CD8-positive, alpha-beta T cell (primary cell): ENCODE measurements at regions of chr19 and their contacts with region 1.

Region 1: DNA sequence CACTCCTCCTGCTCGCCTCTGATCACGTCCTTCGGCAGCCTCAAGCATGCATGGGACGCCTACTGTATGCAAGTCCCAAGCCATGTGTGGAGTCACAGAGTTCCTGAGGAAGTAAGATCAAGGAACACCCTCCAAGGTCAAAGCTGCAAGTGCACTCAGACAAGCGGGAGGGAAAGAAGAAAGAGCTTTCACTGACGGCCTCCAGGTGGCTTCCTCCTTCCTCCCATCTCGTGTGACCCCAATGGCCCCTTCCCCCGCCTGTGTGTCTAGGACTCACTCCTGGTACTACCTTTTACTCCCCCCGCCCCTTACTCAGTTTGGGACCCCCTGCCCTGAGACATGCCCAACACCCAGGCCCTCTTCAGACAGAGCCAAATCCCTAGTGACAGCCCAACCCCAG is 6.0 kb downstream of the HAUS8 start:
- DNase-seq: no peak
- ATAC-seq: no peak
- H3K4me3 ChIP-seq: no peak overlapping the region
- H3K4me3 Mint-ChIP-seq: no peak overlapping the region
- H3K27ac ChIP-seq: no peak overlapping the region
- H3K27ac Mint-ChIP-seq: no peak overlapping the region
- H3K4me1 ChIP-seq: peaks cover 27% of the 10 kb centered on the region
- H3K4me1 Mint-ChIP-seq: peaks cover 48% of the 10 kb centered on the region
- H3K27me3 ChIP-seq: no peaks in the 10 kb centered on the region
- H3K27me3 Mint-ChIP-seq: no peaks in the 10 kb centered on the region
- CTCF ChIP-seq: no peak

Region 2: GRCh38 chr19:17021793-17022583 is 47.2 kb before region 1 on chr19:
- CTCF ChIA-PET with region 1: no interaction called
- POLR2A ChIA-PET with region 1: no interaction called
- intact Hi-C with region 1: no loop called
- DNase-seq: peak in 1 of 9 experiments; percentile 29
- ATAC-seq: no peak
- H3K4me3 ChIP-seq: no peak overlapping the region
- H3K4me3 Mint-ChIP-seq: no peak overlapping the region
- H3K27ac ChIP-seq: no peak overlapping the region
- H3K27ac Mint-ChIP-seq: no peak overlapping the region
- H3K4me1 ChIP-seq: no peaks in the 10 kb centered on the region
- H3K4me1 Mint-ChIP-seq: peaks cover 6% of the 10 kb centered on the region
- H3K27me3 ChIP-seq: peaks cover 0 to 5% of the 10 kb centered on the region in 2 experiments
- H3K27me3 Mint-ChIP-seq: peaks cover 29% of the 10 kb centered on the region
- CTCF ChIP-seq: no peak

Region 3: DNA sequence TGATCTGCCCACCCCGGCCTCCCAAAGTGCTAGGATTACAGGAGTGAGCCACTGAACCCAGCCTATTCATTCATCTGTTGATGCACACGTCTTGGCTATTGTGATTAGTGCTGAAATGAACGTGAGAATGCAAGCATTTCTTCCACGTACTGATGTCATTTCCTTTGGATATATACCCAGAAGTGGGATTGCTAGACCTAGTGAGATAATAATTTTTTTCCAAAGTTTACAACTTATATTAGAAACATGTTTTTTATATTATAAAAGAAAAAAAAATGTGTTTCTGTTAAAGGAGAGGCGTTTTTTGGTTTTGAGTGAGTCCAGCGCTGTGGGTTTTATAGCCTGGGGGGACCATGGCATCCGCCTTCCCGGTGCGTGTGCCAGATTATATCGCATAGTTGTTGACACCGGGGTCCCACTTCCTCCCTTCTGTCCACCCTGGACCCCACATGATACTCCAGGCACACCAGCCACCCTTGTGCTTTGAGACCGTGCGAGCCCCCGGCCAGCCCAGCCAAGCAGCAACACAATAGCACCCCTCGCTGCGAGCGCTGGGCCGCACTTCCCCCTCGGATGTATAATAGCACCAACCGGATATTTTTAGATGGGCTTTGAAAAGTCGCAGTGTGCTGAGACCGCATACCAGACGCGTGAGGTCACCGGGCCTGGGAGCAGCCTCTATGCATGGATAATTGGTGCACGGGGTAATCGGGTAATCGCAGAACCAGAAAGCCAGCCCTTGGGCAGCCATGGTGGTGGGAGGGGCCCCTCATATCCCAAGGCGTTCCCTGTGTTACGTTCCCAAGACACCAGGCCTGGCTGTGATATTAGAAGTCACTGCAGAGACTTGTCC is 66.0 kb after region 1 on chr19:
- CTCF ChIA-PET with region 1: no interaction called
- POLR2A ChIA-PET with region 1: no interaction called
- intact Hi-C with region 1: loop called in 1 of 2 experiments (anchors 2 kb)
- DNase-seq: peak; percentile 19 to 75 (median 53)
- ATAC-seq: peak; percentile 91
- H3K4me3 ChIP-seq: peak overlapping the region in 1 of 2 experiments; percentile 41
- H3K4me3 Mint-ChIP-seq: peak overlapping the region; percentile 80
- H3K27ac ChIP-seq: peak overlapping the region in 1 of 2 experiments; percentile 14
- H3K27ac Mint-ChIP-seq: peak overlapping the region; percentile 87
- H3K4me1 ChIP-seq: peaks cover 13% of the 10 kb centered on the region
- H3K4me1 Mint-ChIP-seq: peaks cover 28% of the 10 kb centered on the region
- H3K27me3 ChIP-seq: no peaks in the 10 kb centered on the region
- H3K27me3 Mint-ChIP-seq: no peaks in the 10 kb centered on the region
- CTCF ChIP-seq: no peak

Region 4: DNA sequence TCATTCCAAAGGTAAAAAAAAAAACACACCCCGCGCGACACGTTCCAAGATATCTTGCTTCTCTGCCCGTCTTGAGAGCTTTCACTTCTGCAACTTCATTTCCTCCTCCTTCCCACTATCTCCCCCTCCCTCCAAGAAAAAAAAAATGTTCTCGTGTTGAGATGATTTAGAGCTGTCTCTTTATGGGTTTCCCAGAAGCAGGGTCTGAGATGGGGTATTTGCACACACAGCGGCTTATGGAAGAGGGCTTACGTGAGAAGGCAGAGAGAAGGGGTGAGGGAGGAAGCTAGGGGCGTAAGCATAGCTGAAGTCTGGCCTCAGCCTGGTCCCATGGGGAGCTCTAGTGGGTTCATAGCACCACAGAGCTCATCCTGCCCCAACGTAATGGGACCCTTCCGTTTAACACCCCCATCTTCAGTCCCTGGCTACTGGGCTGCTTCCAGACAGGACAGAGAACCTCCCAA is 114.7 kb after region 1 on chr19:
- CTCF ChIA-PET with region 1: no interaction called
- POLR2A ChIA-PET with region 1: no interaction called
- intact Hi-C with region 1: loop called (anchors 1 kb)
- DNase-seq: peak in 6 of 9 experiments; percentile 19 to 71 (median 42)
- ATAC-seq: peak; percentile 56
- H3K4me3 ChIP-seq: peak overlapping the region; percentile 36 to 52
- H3K4me3 Mint-ChIP-seq: peak overlapping the region; percentile 92
- H3K27ac ChIP-seq: peak overlapping the region; percentile 57 to 78
- H3K27ac Mint-ChIP-seq: peak overlapping the region; percentile 97
- H3K4me1 ChIP-seq: peaks cover 20% of the 10 kb centered on the region
- H3K4me1 Mint-ChIP-seq: peaks cover 32% of the 10 kb centered on the region
- H3K27me3 ChIP-seq: no peaks in the 10 kb centered on the region
- H3K27me3 Mint-ChIP-seq: no peaks in the 10 kb centered on the region
- CTCF ChIP-seq: no peak

Region 5: GRCh38 chr19:17235618-17236377 is 166.6 kb after region 1 on chr19:
- CTCF ChIA-PET with region 1: interaction called, 12 read pairs
- POLR2A ChIA-PET with region 1: no interaction called
- intact Hi-C with region 1: loop called (anchors 1 kb)
- DNase-seq: peak; percentile 52 to 91 (median 78)
- ATAC-seq: peak; percentile 89
- H3K4me3 ChIP-seq: peak overlapping the region; percentile 63 to 86
- H3K4me3 Mint-ChIP-seq: peak overlapping the region; percentile 78
- H3K27ac ChIP-seq: peak overlapping the region in 1 of 2 experiments; percentile 40
- H3K27ac Mint-ChIP-seq: no peak overlapping the region
- H3K4me1 ChIP-seq: peaks cover 13% of the 10 kb centered on the region
- H3K4me1 Mint-ChIP-seq: peaks cover 10% of the 10 kb centered on the region
- H3K27me3 ChIP-seq: no peaks in the 10 kb centered on the region
- H3K27me3 Mint-ChIP-seq: no peaks in the 10 kb centered on the region
- CTCF ChIP-seq: peak; percentile 58